Heart right ventricle (tissue), 16 donors: ENCODE measurements at regions of chr18 and their contacts with region 1.

Region 1: DNA sequence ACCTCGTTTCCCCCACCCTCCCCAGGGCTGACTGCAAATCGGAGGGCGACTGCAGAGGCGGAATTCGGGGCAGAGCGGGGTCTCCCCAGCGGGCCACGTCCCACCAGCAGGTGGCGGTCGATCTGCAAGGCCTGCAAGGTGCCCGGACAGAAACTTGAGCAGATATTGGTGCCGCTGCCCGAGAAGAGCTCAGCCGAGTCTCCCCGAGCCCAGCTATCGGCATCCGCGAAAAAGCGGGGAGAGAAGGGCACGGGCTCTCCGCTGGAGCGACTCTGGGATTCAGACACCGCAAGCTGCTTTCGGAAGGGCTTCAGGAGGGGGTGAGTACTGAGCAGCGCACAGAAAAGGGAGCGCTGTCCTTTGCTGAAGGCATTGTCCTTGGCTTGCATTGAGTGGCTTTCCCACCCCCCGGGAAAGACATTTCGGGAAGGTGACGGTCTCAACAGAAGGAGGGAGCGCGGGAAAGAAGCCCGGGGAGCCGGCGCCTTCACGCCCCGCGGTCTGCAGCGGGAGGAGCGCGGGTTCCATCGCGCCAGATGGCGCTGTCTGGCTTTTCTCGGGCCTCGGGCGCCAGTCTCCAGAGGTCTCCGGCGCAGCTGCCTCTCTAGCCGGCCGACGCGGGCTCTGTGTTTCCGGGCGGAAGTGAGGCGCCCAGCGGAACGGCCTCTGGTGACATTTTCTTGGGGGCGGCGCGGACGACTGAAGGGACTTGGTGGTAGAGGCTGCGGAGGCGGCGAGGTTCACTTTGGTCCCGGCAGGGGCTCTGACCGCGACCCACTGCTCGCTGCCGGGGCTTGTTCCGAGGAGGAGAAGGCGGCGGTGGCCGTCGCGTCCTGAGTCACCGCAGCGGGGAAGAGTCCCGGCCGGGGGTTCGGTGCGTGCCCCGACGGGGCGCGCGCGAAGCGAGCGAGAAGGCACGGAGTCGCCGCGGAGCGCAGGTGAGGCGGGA is 69.5 kb downstream of the HAUS1 start:
- DNase-seq: peak; percentile 94
- ATAC-seq: peak; percentile 97 to 99 (median 98)
- H3K4me3 ChIP-seq: peak overlapping the region; percentile 73 to 100 (median 90)
- H3K27ac ChIP-seq: peak overlapping the region; percentile 60 to 97 (median 93)
- H3K4me1 ChIP-seq: peaks cover 3 to 39% (median 32%) of the 10 kb centered on the region in 9 donors
- H3K27me3 ChIP-seq: no peaks in the 10 kb centered on the region
- CTCF ChIP-seq: peak; percentile 67 to 87 (median 74)

Region 2: DNA sequence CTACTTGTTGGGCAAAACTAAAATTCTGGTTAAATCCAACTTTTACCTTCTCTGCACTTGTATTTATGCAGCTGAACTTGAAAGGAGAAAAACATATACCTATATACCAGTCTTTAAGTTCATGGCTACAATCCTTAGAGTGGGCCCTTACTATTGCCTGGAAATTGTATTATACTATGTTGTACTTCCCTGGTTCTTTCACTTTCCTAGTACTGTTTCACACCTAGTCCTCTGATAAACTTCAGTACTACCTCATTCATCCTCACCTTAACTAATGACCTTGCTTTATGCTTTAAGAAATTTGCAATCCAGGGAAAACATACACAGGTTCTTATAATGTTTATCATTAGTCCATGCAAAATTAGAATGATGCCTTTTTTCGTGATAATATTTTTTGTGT is 34.3 kb after region 1 on chr18:
- intact Hi-C with region 1: loop called in 5 of 10 experiments (anchors 1 to 5 kb)
- DNase-seq: no peak
- ATAC-seq: no peak
- H3K4me3 ChIP-seq: no peak overlapping the region
- H3K27ac ChIP-seq: no peak overlapping the region
- H3K4me1 ChIP-seq: peaks cover 0 to 57% (median 14%) of the 10 kb centered on the region in 9 donors
- H3K27me3 ChIP-seq: no peaks in the 10 kb centered on the region
- CTCF ChIP-seq: no peak

Region 3: GRCh38 chr18:46264235-46264893 is 90.7 kb after region 1 on chr18:
- intact Hi-C with region 1: loop called in 4 of 10 experiments (anchors 2 to 5 kb)
- DNase-seq: no peak
- ATAC-seq: peak in 5 of 8 donors; percentile 8 to 64 (median 38)
- H3K4me3 ChIP-seq: no peak overlapping the region
- H3K27ac ChIP-seq: peak overlapping the region in 7 of 10 donors; percentile 22 to 73 (median 48)
- H3K4me1 ChIP-seq: peaks cover 7 to 83% (median 44%) of the 10 kb centered on the region in 9 donors
- H3K27me3 ChIP-seq: no peaks in the 10 kb centered on the region
- CTCF ChIP-seq: no peak

Region 4: DNA sequence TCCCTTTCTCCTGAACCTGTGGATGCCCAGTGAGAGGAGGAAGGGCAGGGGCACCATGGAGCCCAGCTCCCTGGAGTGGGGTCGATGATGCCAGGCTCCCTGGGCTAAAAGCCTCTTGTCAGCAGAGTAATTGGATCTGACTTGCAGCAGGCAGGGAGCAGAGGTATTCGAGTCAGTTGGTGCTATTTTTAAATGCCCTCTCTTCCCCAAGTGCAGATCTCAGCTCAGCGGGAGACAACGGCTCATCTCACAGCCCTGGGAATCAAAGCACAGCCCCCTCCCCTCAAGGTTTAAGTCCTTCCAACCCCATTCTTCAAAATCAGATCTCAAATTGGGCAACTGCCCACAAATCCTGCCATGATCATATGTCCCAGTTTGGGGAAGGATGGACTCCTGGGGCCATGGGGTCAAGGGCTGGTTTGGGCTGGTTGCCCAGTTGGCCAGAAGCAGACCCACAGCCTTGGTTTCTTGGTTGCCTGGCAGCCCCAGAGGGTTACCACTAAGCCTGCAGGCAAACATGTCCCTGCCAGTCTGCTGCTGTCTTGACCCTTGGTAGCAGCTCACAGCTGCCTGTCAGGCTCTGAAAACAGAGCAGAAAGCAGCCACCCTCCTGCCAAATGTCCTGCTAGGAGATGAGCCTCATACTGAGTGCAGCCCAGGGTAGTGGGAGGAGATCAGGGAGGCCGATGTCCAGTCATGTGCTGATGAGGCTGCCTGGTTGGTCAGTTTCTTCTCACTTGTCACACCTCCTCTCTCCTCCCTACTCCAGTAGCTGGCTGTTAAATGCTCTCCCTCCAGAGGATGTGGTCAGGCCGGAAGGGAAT is 238.4 kb after region 1 on chr18:
- intact Hi-C with region 1: loop called in 1 of 10 experiments (anchors 10 kb)
- DNase-seq: peak; percentile 40 to 63
- ATAC-seq: peak; percentile 68 to 88 (median 82)
- H3K4me3 ChIP-seq: peak overlapping the region in 1 of 10 donors; percentile 9
- H3K27ac ChIP-seq: peak overlapping the region; percentile 61 to 94 (median 86)
- H3K4me1 ChIP-seq: peaks cover 5 to 90% (median 55%) of the 10 kb centered on the region in 9 donors
- H3K27me3 ChIP-seq: no peaks in the 10 kb centered on the region
- CTCF ChIP-seq: no peak

Region 5: DNA sequence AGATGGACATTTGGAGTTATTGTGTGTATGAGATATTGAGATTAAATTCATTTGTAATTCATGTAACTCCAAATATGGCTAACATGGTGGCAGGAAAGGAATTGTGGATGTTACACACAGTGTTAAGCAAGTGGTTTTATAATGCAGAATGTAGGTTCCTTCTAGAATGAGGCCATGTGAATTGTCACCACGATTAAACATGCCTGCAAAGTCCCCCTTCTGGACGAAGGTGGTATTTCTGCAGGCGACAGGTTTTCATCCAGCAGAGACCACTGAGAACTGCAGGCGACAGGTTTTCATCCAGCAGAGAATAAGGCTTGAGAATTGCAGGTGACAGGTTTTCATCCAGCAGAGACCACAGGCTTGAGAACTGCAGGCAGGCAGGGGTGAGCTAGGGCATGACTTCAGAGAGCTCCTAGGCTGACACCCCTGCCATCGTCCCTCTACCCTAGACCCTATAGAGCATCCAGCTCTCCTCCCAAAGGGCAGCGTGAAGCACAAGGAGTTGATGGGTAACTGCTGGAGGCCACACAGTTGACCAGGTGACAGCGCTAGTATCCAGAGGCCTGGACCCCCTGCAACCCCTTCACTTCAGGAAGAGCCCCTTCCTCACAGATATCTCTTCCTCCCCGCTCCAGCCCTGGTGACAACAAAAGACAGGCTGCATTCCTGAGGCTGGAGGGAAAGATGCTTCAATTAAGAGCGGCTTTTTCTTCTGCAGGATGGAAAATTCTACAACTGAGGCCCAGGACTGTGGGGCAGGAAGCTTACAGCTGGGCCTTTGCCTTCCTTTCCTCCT is 307.6 kb after region 1 on chr18:
- intact Hi-C with region 1: loop called in 4 of 10 experiments (anchors 5 to 10 kb)
- DNase-seq: peak in 1 of 2 donors; percentile 42
- ATAC-seq: peak in 6 of 8 donors; percentile 23 to 64 (median 60)
- H3K4me3 ChIP-seq: no peak overlapping the region
- H3K27ac ChIP-seq: no peak overlapping the region
- H3K4me1 ChIP-seq: peaks cover 0 to 9% (median 0%) of the 10 kb centered on the region in 9 donors
- H3K27me3 ChIP-seq: no peaks in the 10 kb centered on the region
- CTCF ChIP-seq: peak; percentile 55 to 81 (median 75)

Region 6: GRCh38 chr18:46660955-46661749 is 487.5 kb after region 1 on chr18:
- intact Hi-C with region 1: loop called in 9 of 10 experiments (anchors 1 to 10 kb)
- DNase-seq: no peak
- ATAC-seq: peak in 3 of 8 donors; percentile 27 to 47 (median 45)
- H3K4me3 ChIP-seq: no peak overlapping the region
- H3K27ac ChIP-seq: no peak overlapping the region
- H3K4me1 ChIP-seq: no peaks in the 10 kb centered on the region
- H3K27me3 ChIP-seq: no peaks in the 10 kb centered on the region
- CTCF ChIP-seq: no peak